Activated T-helper 1 cell treated with anti-CD3 and anti-CD28 coated beads, Interleukin-12 subunit alpha, Interleukin-12 subunit beta, Interleukin-2, Interleukin-4 antibody, amounts not matched to agents 30 ng/mL and 10 ng/mL and 1 ng/mL, durations not matched to agents 14 hours and 24 hours and 36 hours (primary cell): ENCODE measurements at regions of chr17 and their contacts with region 1.

Region 1: DNA sequence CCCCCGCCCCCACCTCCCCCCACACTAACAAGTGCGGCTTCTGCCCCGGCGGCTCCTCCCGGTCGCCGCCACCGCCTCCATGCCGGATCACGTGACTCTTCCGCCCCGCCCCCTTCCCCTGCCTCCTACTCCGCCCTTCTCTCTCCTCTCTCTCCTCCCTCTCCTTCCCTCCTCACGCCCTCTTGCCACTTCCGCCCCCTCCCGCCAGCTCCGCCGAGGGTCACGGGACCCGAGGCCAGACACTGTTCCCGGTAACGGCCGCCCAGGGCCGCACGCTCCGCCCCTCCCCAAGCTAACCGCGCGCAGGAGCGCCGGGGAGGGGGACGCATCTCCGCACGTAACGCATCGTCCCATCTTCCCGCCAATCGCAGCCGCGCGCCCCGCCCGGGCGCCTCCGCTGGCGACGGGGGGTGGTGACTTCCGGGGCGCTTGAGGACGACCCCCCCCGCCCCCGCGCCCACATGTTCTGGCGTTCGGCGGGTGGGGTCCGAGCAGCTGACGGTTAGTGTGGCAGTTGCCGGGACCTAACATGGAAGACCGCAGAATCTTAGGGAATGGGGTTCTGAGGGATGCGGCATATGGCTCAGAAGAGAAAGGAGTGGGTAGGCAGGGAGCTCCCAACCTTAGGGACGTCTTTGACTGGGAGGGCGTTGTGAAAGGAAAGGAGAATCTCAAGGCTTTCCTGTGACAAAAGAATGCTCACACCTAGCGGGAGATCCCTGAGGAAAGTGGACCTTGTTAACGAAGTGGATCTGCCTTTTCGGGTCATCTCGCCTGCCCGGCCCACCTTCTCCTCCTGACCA is at the start of gene USP32:
- DNase-seq: peak; percentile 97
- H3K4me3 Mint-ChIP-seq: peak within 1 kb of the TSS; percentile 97
- H3K27ac Mint-ChIP-seq: peak within 1 kb of the TSS; percentile 95
- H3K4me1 Mint-ChIP-seq: peaks cover 50% of the 10 kb centered on the region
- H3K27me3 Mint-ChIP-seq: no peaks in the 10 kb centered on the region
- total RNA-seq, gene USP32: 30.5 and 31.2 TPM in 2 replicates

Region 2: GRCh38 chr17:59155439-59156182 is 1236.6 kb before region 1 on chr17 and contains the start of gene PRR11:
- intact Hi-C with region 1: loop called (anchors 5 kb)
- DNase-seq: peak; percentile 94
- H3K4me3 Mint-ChIP-seq: no peak within 1 kb of the TSS
- H3K27ac Mint-ChIP-seq: no peak within 1 kb of the TSS
- H3K4me1 Mint-ChIP-seq: peaks cover 63% of the 10 kb centered on the region
- H3K27me3 Mint-ChIP-seq: no peaks in the 10 kb centered on the region
- total RNA-seq, gene PRR11: 29.4 and 32.7 TPM in 2 replicates

Region 3: DNA sequence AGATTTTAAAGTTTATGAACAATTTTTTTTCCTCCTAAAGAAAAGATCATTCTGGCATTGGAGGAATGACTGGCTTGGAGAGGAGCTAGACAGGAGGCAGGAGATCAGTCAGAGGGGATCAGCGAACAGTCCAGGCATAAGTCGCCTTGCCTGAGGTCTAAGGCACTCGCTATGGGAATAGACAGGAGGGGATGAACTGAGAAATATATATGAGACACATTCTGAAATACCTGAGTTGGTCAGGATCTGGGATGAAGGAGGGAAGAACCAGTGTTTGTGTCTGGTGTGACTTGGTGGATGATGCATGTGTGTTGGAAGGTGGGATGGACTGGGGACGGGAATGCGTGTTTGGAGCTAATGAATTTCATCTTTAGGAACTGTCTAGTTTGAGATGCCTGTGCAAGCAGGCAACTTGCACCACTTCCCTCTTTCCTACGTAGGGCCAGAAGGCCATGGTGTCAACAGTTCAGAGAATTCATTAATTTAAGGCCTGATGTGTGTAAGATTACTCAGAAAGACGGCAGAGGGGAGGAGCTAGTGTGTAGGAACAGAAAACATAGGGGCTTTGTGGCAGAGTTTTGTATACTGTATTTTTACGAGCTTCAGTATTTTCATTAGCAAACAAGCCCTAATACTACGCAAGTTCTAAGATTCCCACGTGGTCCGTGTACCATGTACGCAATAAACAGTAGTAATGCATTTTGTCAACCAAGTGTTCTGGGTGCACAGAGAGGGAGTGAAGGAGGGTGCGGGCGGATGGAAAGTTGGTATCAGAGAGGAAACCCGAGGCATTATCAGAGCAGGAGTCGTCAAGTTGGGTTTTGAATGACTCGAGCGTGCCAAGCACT is 314.3 kb before region 1 on chr17:
- intact Hi-C with region 1: loop called (anchors 10 kb)
- DNase-seq: no peak
- H3K4me3 Mint-ChIP-seq: peak overlapping the region; percentile 93
- H3K27ac Mint-ChIP-seq: peak overlapping the region; percentile 100
- H3K4me1 Mint-ChIP-seq: peaks cover 24% of the 10 kb centered on the region
- H3K27me3 Mint-ChIP-seq: no peaks in the 10 kb centered on the region

Region 4: GRCh38 chr17:60345227-60345626 is 47.0 kb before region 1 on chr17:
- intact Hi-C with region 1: no loop called
- DNase-seq: no peak
- H3K4me3 Mint-ChIP-seq: no peak overlapping the region
- H3K27ac Mint-ChIP-seq: no peak overlapping the region
- H3K4me1 Mint-ChIP-seq: peaks cover 28% of the 10 kb centered on the region
- H3K27me3 Mint-ChIP-seq: no peaks in the 10 kb centered on the region

Region 5: DNA sequence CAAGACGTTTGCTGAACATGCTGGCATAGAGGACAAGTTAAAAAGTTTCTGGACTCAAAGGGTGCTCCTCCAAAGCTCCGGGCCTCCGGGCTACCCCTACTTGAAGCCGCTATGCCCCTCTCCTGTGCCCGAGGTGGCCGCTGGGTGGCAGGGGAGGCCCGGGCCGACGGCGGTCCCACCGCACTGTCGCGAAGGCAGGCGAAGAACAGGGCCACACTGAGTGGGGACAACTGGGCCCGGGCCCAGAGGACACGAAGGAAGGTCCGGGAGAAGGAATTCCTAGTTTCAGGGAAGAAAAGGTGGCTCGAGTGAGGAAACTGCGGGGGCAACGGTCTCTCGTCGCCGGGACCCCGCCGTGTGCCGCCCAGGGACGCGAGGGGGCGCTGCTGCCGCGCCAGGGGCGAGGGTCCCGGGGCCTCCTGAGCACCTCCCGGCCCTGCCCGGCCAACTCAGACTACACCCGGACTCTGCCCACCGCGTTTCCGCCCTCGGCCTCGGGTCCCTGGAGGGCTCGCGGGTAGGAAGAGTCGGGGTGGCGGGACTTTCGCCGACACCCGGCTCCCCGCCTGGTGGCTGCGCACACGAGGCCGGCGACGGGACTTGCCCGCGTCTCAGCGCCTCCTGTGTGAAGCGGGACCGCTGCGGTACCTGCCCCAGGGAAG is 29.2 kb after region 1 on chr17:
- intact Hi-C with region 1: loop called (anchors 1 kb)
- DNase-seq: peak; percentile 63
- H3K4me3 Mint-ChIP-seq: peak overlapping the region; percentile 78
- H3K27ac Mint-ChIP-seq: peak overlapping the region; percentile 42
- H3K4me1 Mint-ChIP-seq: peaks cover 7% of the 10 kb centered on the region
- H3K27me3 Mint-ChIP-seq: peaks cover 6% of the 10 kb centered on the region

Region 6: DNA sequence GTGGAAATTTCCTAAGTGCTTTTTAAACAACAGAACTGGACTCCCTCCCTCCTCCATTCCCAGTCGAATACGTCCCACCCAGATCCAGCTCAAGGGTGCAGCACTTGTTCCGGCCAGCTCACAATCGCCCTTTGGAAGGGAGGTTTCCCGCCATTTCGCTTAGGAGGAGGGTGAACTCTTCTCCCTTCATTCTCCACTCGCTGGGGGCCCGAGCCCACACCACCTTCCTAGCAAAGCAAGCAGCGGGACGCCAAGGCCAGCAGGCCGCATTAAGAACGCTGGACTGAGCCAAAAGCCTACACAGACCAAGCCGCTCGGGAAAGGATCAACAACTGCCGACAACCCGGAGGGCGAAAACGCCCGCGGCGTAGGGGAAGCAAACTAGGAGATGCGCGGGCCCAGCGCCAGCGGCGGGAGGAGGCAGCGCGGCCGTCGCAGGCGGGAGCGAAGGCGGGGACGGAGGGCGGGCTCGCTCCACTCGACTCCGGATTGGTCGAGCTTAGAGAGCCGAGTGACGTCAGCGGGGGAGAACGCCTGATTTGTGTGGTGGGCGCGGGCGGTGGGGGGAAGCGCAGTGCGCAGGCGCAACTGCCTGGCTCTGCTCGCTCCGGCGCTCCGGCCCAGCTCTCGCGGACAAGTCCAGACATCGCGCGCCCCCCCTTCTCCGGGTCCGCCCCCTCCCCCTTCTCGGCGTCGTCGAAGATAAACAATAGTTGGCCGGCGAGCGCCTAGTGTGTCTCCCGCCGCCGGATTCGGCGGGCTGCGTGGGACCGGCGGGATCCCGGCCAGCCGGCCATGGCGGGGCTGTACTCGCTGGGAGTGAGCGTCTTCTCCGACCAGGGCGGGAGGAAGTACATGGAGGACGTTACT is 207.6 kb after region 1 on chr17 and contains the start of gene PPM1D:
- intact Hi-C with region 1: loop called (anchors 1 kb)
- DNase-seq: peak; percentile 97
- H3K4me3 Mint-ChIP-seq: peak within 1 kb of the TSS; percentile 95
- H3K27ac Mint-ChIP-seq: peak within 1 kb of the TSS; percentile 95
- H3K4me1 Mint-ChIP-seq: peaks cover 44% of the 10 kb centered on the region
- H3K27me3 Mint-ChIP-seq: no peaks in the 10 kb centered on the region
- total RNA-seq, gene PPM1D: 18.6 and 19.7 TPM in 2 replicates